Right ventricle myocardium superior (tissue), 1 donor: ENCODE measurements at regions of chr12 and their contacts with region 1.

Region 1: GRCh38 chr12:110583137-110584059 is at the start of gene PPTC7:
- DNase-seq: peak; percentile 98
- ATAC-seq: peak; percentile 90
- total RNA-seq, gene PPTC7: 98.3 TPM

Region 2: GRCh38 chr12:110546339-110546738 is 37.1 kb before region 1 on chr12:
- intact Hi-C with region 1: loop called (anchors 5 kb)
- DNase-seq: no peak
- ATAC-seq: peak; percentile 7